ENCODE measurements at regions of chr4 and their contacts with region 1.

Region 1: GRCh38 chr4:153426207-153426885 is 39.8 kb upstream of the TMEM131L start:
- DNase-seq: no peak
- H3K4me3 ChIP-seq: no peak overlapping the region
- H3K27ac ChIP-seq: no peak overlapping the region
- H3K4me1 ChIP-seq: no peaks in the 10 kb centered on the region
- H3K27me3 ChIP-seq: no peaks in the 10 kb centered on the region
- CTCF ChIP-seq: no peak
- POLR2A ChIP-seq: no peak

Region 2: DNA sequence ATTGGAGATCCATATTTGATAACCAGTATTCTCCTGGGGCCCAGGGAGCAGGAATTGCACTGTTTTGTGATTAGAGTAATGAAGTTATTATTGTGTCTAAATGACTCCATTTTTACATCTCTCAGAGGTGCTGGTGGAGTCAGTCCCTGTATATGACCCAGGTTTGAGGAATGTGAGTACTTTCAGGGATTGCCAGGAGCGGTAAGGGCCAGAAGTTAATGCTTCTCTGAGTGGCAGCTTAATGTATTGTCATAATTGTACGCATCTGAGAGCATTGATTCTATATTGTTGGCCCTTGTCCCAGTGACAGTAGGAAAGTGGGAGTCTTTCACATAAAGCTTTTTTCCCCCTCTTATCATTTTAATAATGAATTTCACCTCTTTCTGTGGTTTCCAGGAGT is 1811.8 kb before region 1 on chr4:
- intact Hi-C with region 1: loop called (anchors 10 kb)
- DNase-seq: no peak
- H3K4me3 ChIP-seq: no peak overlapping the region
- H3K27ac ChIP-seq: no peak overlapping the region
- H3K4me1 ChIP-seq: no peaks in the 10 kb centered on the region
- H3K27me3 ChIP-seq: no peaks in the 10 kb centered on the region
- CTCF ChIP-seq: no peak
- POLR2A ChIP-seq: no peak

Measured in breast epithelium (tissue), 4 donors.